ENCODE measurements at regions of chr20 and their contacts with region 1.

Region 1: DNA sequence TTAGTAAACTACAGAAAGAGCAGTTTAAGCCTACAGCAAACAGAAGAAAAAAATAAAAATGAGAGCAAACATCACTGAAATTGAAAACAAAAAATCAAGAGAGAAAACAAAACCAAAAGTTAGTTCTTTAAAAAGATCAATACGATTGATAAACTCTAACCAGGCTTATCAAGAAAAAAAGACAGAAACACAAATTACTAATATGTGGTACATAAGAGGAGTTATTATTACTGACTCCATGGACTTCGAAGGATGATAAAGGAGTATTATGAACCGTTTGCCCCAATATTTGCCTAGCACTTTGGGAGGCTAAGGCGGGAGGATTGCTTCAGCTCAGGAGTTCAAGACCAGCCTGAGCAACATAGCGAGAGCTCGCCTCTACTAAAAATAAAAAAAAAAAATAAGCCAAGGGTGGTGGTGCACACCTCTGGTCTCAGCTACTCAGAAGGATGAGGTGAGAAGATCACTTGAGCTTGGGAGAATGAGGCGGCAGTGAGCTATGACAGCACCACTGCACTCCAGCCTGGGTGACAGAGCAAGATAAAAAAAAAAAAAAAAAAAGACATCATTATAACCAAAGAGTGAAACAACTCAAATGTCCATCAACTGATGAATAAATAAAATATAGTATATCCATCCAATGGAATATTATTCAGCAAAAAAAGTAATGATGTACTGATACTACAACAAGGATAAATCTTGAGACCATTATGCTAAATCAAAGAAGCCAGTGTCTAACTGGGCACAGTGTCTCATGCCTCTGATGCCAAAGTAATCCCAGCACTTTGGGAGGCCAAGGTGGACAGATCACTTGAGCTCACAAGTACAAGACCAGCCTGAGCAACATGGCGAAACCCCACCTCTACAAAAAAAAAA is 12.9 kb downstream of the TRPC4AP start:
- DNase-seq: no peak
- H3K4me3 Mint-ChIP-seq: no peak overlapping the region
- H3K27ac Mint-ChIP-seq: no peak overlapping the region
- H3K4me1 Mint-ChIP-seq: peaks cover 25% of the 10 kb centered on the region
- H3K27me3 Mint-ChIP-seq: no peaks in the 10 kb centered on the region

Region 2: GRCh38 chr20:35065181-35065580 is 14.5 kb before region 1 on chr20:
- CTCF ChIA-PET with region 1: no interaction called
- intact Hi-C with region 1: loop called (anchors 2 kb)
- DNase-seq: no peak
- H3K4me3 Mint-ChIP-seq: no peak overlapping the region
- H3K27ac Mint-ChIP-seq: peak overlapping the region; percentile 42
- H3K4me1 Mint-ChIP-seq: peaks cover 61% of the 10 kb centered on the region
- H3K27me3 Mint-ChIP-seq: no peaks in the 10 kb centered on the region

Region 3: GRCh38 chr20:35215066-35215956 is 135.6 kb after region 1 on chr20:
- CTCF ChIA-PET with region 1: no interaction called
- intact Hi-C with region 1: no loop called
- DNase-seq: no peak
- H3K4me3 Mint-ChIP-seq: no peak overlapping the region
- H3K27ac Mint-ChIP-seq: no peak overlapping the region
- H3K4me1 Mint-ChIP-seq: no peaks in the 10 kb centered on the region
- H3K27me3 Mint-ChIP-seq: no peaks in the 10 kb centered on the region

Measured in activated naive CD4-positive, alpha-beta T cell treated with anti-CD3 and anti-CD28 coated beads for 36 hours (primary cell).